Cardiac septum (tissue), 1 donor: ENCODE measurements at regions of chr4 and their contacts with region 1.

Region 1: DNA sequence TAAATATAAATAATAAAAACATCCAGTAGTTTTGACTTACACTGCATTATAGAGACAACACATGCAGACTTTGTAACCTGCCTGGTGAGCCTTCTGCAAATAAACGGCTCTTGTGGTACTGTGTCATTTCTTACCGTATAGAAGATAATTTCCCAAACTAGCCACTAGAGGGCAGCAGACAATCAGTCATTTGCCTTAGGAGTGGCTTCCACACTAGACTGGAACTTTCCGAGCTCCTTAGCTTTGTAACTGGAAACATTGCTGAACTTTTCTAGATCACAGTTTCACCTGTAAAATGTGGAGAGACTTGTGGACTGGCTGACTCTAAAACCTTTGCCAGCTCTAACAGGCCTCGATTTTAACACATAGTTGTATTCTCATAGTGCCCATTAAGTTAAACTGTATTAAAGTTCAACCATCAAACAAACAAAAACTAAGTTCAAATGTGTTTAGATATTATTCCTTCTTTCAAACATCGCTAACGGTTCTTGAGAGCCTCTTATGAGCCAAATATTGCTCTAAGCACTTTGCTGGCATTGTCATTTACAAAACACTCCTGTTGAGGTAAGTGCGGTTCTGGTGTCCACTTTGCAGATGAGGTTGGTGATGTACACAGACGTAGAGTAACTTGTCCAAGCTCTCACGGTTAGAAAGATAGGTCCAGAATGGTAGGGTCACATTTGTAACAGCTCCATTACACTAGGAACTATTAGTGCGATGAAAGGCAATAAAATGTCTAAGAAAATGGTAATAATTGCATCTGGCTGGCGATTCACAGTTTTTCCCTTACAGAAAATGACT is 345.5 kb downstream of the ANK2 start:
- DNase-seq: no peak

Region 2: GRCh38 chr4:113435893-113436292 is 41.0 kb after region 1 on chr4:
- intact Hi-C with region 1: loop called (anchors 5 kb)
- DNase-seq: no peak

Region 3: DNA sequence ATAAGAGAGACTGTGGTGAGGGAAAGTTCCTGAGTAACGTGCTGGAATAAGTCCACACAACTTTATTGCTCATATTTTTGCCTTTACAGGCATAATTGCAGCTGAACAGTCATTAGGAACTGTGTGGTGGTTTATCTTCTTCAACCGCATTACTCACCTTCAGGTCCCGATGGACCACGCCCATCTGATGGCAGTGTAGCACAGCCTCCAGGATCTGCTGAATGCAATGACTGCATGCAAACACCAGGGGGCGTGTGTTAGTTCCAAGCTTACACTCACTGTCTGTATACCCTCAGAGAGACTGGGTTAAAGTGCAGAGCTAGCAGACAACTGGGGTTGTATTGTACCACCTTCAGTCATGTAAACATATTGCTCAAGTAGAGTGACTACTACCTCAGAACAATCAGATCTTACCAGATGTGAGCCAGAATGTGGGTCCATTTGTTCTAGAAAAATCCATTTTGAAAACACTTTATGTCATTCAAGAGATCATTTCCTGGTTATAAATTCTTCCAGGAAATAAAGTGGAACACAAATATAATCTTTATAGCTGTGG is 152.6 kb after region 1 on chr4:
- intact Hi-C with region 1: loop called (anchors 5 kb)
- DNase-seq: peak; percentile 91

Region 4: GRCh38 chr4:113618205-113618604 is 223.3 kb after region 1 on chr4:
- intact Hi-C with region 1: loop called (anchors 10 kb)
- DNase-seq: no peak

Region 5: GRCh38 chr4:113979148-113979904 is 584.4 kb after region 1 on chr4 and contains the start of gene ARSJ:
- intact Hi-C with region 1: no loop called
- DNase-seq: peak; percentile 75
- total RNA-seq, gene ARSJ: 12.8 TPM

Region 6: GRCh38 chr4:114077610-114078009 is 682.7 kb after region 1 on chr4:
- intact Hi-C with region 1: loop called (anchors 5 kb)
- DNase-seq: no peak